Activated CD4-positive, alpha-beta memory T cell treated with anti-CD3 and anti-CD28 coated beads for 36 hours (primary cell): ENCODE measurements at regions of chr14 and their contacts with region 1.

Region 1: DNA sequence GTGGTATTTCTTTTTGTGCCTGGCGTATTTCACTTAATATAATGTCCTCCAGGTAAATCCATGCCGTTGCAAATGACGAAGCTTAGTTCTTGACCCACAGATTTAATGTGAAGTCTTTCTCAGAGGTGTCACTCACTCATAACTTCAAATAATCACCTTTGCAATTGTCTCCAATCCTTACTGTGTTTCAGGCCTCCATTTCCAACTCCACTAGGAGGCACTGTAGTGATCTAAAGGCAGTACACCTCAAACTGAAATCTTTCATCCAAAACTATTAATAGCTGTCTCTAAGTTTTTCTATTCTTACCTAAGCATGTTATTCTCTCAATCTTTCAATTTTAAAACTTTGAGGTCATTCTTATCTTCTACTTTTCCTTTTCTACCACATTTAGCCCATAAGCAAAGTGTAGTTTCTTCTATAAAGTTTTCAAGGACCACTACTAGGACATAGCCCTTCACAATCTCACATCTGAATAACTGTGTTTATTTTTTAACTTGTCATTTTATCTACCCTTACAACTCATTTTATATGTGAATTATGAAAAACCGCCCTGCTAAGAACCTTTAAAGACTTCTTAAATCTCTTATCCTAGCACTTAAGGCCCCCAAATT is 25.5 kb upstream of the FBXO34 start:
- DNase-seq: no peak
- H3K4me3 Mint-ChIP-seq: no peak overlapping the region
- H3K27ac Mint-ChIP-seq: no peak overlapping the region
- H3K4me1 Mint-ChIP-seq: no peaks in the 10 kb centered on the region
- H3K27me3 Mint-ChIP-seq: no peaks in the 10 kb centered on the region

Region 2: GRCh38 chr14:55221186-55221585 is 24.6 kb before region 1 on chr14:
- CTCF ChIA-PET with region 1: no interaction called
- POLR2A ChIA-PET with region 1: no interaction called
- intact Hi-C with region 1: no loop called
- DNase-seq: no peak
- H3K4me3 Mint-ChIP-seq: no peak overlapping the region
- H3K27ac Mint-ChIP-seq: no peak overlapping the region
- H3K4me1 Mint-ChIP-seq: peaks cover 4% of the 10 kb centered on the region
- H3K27me3 Mint-ChIP-seq: peaks cover 2% of the 10 kb centered on the region

Region 3: GRCh38 chr14:55348766-55349453 is 103.1 kb after region 1 on chr14:
- CTCF ChIA-PET with region 1: interaction called, 66 read pairs
- POLR2A ChIA-PET with region 1: no interaction called
- intact Hi-C with region 1: loop called (anchors 1 kb)
- DNase-seq: peak; percentile 29
- H3K4me3 Mint-ChIP-seq: peak overlapping the region; percentile 9
- H3K27ac Mint-ChIP-seq: no peak overlapping the region
- H3K4me1 Mint-ChIP-seq: peaks cover 58% of the 10 kb centered on the region
- H3K27me3 Mint-ChIP-seq: no peaks in the 10 kb centered on the region

Region 4: GRCh38 chr14:55430024-55430690 is 184.4 kb after region 1 on chr14:
- CTCF ChIA-PET with region 1: interaction called, 11 read pairs
- POLR2A ChIA-PET with region 1: no interaction called
- intact Hi-C with region 1: loop called (anchors 1 kb)
- DNase-seq: peak; percentile 24
- H3K4me3 Mint-ChIP-seq: no peak overlapping the region
- H3K27ac Mint-ChIP-seq: peak overlapping the region; percentile 20
- H3K4me1 Mint-ChIP-seq: peaks cover 28% of the 10 kb centered on the region
- H3K27me3 Mint-ChIP-seq: no peaks in the 10 kb centered on the region